CD8-positive, alpha-beta T cell (primary cell): ENCODE measurements at regions of chr17 and their contacts with region 1.

Region 1: DNA sequence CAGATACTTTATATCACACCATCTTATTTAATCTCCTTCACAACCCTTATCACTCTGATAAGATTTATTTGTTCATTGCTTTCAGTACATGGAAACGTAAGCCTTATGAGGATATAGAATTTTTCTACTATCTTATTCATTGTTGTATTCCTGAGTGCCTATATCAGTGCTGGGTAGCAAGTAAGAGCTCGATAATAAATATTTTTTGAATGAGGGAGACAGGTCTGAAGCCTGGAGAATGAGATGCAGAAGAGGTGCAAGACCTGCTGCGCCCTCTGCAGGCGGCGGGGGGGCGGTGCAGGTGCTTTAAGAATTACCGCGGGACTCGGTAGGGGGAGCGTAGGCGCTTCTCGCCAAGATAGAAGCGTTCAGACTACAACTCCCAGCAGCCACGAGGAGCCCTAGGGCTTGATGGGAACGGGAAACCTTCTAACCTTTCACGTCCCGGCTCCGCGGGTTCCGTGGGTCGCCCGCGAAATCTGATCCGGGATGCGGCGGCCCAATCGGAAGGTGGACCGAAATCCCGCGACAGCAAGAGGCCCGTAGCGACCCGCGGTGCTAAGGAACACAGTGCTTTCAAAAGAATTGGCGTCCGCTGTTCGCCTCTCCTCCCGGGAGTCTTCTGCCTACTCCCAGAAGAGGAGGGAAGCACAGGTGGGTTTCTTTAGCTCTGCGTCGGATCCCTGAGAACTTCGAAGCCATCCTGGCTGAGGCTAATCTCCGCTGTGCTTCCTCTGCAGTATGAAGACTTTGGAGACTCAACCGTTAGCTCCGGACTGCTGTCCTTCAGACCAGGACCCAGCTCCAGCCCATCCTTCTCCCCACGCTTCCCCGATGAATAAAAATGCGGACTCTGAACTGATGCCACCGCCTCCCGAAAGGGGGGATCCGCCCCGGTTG is at the start of gene WRAP53:
- DNase-seq: peak; percentile 93 to 97 (median 95)
- ATAC-seq: peak; percentile 77
- H3K4me3 ChIP-seq: peak within 1 kb of the TSS; percentile 81 to 92
- H3K4me3 Mint-ChIP-seq: peak within 1 kb of the TSS; percentile 97
- H3K27ac ChIP-seq: peak within 1 kb of the TSS; percentile 98 to 100
- H3K27ac Mint-ChIP-seq: peak within 1 kb of the TSS; percentile 100
- H3K4me1 ChIP-seq: peaks cover 32% of the 10 kb centered on the region
- H3K4me1 Mint-ChIP-seq: peaks cover 37% of the 10 kb centered on the region
- H3K27me3 ChIP-seq: no peaks in the 10 kb centered on the region
- H3K27me3 Mint-ChIP-seq: no peaks in the 10 kb centered on the region
- CTCF ChIP-seq: peak; percentile 98
- total RNA-seq, gene WRAP53: 5.2 to 6.6 TPM

Region 2: GRCh38 chr17:6651357-6651918 is 1036.7 kb before region 1 on chr17 and contains the starts of genes C17orf100 and MED31:
- CTCF ChIA-PET with region 1: no interaction called
- POLR2A ChIA-PET with region 1: no interaction called
- intact Hi-C with region 1: loop called in 1 of 2 experiments (anchors 10 kb)
- DNase-seq: peak; percentile 90 to 97 (median 94)
- ATAC-seq: peak; percentile 88
- H3K4me3 ChIP-seq: peak within 1 kb of the TSS; percentile 84 to 86
- H3K4me3 Mint-ChIP-seq: peak within 1 kb of the TSS; percentile 97
- H3K27ac ChIP-seq: peak within 1 kb of the TSS; percentile 99 to 100
- H3K27ac Mint-ChIP-seq: peak within 1 kb of the TSS; percentile 100
- H3K4me1 ChIP-seq: peaks cover 23% of the 10 kb centered on the region
- H3K4me1 Mint-ChIP-seq: peaks cover 69% of the 10 kb centered on the region
- H3K27me3 ChIP-seq: no peaks in the 10 kb centered on the region
- H3K27me3 Mint-ChIP-seq: no peaks in the 10 kb centered on the region
- CTCF ChIP-seq: no peak
- total RNA-seq, gene C17orf100: 0.39 to 0.73 TPM
- total RNA-seq, gene MED31: 21.4 to 25.6 TPM

Region 3: GRCh38 chr17:7252176-7253043 is 435.7 kb before region 1 on chr17 and contains the start of gene ELP5:
- CTCF ChIA-PET with region 1: no interaction called
- POLR2A ChIA-PET with region 1: interaction called, 3 read pairs
- intact Hi-C with region 1: loop called in 1 of 2 experiments (anchors 5 kb)
- DNase-seq: peak; percentile 73 to 99 (median 87)
- ATAC-seq: peak; percentile 48
- H3K4me3 ChIP-seq: peak within 1 kb of the TSS; percentile 81 to 92
- H3K4me3 Mint-ChIP-seq: peak within 1 kb of the TSS; percentile 97
- H3K27ac ChIP-seq: peak within 1 kb of the TSS; percentile 99
- H3K27ac Mint-ChIP-seq: peak within 1 kb of the TSS; percentile 100
- H3K4me1 ChIP-seq: peaks cover 31% of the 10 kb centered on the region
- H3K4me1 Mint-ChIP-seq: peaks cover 44% of the 10 kb centered on the region
- H3K27me3 ChIP-seq: no peaks in the 10 kb centered on the region
- H3K27me3 Mint-ChIP-seq: no peaks in the 10 kb centered on the region
- CTCF ChIP-seq: no peak
- total RNA-seq, gene ELP5: 38.9 to 39.0 TPM

Region 4: DNA sequence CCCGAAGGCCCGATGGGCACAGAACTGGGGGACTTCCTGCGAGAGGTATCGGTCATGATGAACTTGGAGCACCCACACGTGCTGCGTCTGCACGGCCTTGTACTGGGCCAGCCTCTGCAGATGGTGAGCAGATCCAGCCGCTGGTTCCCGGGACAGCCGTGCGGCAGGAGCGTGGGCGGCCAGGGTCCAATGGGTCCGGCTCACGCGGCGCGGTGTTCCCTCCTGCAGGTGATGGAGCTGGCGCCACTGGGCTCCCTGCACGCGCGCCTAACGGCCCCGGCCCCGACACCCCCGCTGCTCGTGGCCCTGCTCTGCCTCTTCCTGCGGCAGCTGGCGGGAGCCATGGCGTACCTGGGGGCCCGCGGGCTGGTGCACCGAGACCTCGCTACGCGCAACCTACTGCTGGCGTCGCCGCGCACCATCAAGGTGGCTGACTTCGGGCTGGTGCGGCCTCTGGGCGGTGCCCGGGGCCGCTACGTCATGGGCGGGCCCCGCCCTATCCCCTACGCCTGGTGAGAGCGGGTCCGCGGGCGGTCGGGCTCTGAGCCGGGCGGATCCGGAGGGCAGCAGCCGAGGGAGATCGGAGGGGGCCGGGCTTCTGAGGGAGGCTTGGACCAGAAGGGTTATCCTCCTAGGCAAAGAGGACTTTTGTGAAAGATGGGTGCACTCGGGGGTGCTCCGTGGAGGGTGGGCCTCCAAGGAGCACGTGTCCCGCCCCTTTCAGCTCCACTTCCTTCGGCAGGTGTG is 304.2 kb before region 1 on chr17:
- CTCF ChIA-PET with region 1: no interaction called
- POLR2A ChIA-PET with region 1: interaction called, 6 read pairs
- intact Hi-C with region 1: loop called in 1 of 2 experiments (anchors 1 kb)
- DNase-seq: peak; percentile 60 to 91 (median 80)
- ATAC-seq: peak; percentile 94
- H3K4me3 ChIP-seq: peak overlapping the region; percentile 66 to 75
- H3K4me3 Mint-ChIP-seq: peak overlapping the region; percentile 88
- H3K27ac ChIP-seq: peak overlapping the region; percentile 80 to 92
- H3K27ac Mint-ChIP-seq: peak overlapping the region; percentile 96
- H3K4me1 ChIP-seq: peaks cover 21% of the 10 kb centered on the region
- H3K4me1 Mint-ChIP-seq: peaks cover 8% of the 10 kb centered on the region
- H3K27me3 ChIP-seq: peaks cover 12 to 14% of the 10 kb centered on the region in 2 experiments
- H3K27me3 Mint-ChIP-seq: peaks cover 29% of the 10 kb centered on the region
- CTCF ChIP-seq: no peak

Region 5: GRCh38 chr17:7561028-7561575 is 127.1 kb before region 1 on chr17:
- CTCF ChIA-PET with region 1: interaction called, 17 read pairs
- POLR2A ChIA-PET with region 1: interaction called, 7 read pairs
- intact Hi-C with region 1: loop called in 1 of 2 experiments (anchors 1 kb)
- DNase-seq: peak; percentile 67 to 89 (median 81)
- ATAC-seq: peak; percentile 68
- H3K4me3 ChIP-seq: peak overlapping the region; percentile 50 to 95
- H3K4me3 Mint-ChIP-seq: peak overlapping the region; percentile 94
- H3K27ac ChIP-seq: peak overlapping the region; percentile 91 to 97
- H3K27ac Mint-ChIP-seq: peak overlapping the region; percentile 99
- H3K4me1 ChIP-seq: peaks cover 49% of the 10 kb centered on the region
- H3K4me1 Mint-ChIP-seq: peaks cover 50% of the 10 kb centered on the region
- H3K27me3 ChIP-seq: no peaks in the 10 kb centered on the region
- H3K27me3 Mint-ChIP-seq: no peaks in the 10 kb centered on the region
- CTCF ChIP-seq: peak; percentile 85

Region 6: DNA sequence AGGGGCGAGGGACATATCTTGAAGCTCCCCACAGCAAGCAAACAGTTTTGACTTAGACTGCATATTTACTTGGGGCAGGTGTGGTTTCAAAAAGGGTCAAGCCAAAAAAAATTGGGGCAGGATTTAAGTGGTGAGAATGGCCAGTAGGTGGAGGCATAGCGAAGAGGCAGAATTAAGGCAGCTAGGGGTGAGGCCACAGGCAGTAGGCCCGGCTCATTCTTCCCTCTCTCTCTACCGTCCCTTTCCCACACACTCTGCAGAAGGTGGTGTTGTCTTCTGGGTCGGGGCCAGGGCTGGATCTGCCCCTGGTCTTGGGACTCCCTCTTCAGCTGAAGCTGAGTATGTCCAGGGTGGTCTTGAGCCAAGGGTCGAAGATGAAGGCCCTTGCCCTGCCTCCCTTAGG is 55.7 kb before region 1 on chr17:
- CTCF ChIA-PET with region 1: interaction called, 32 read pairs
- POLR2A ChIA-PET with region 1: interaction called, 58 read pairs
- intact Hi-C with region 1: loop called (anchors 1 kb)
- DNase-seq: peak in 3 of 9 experiments; percentile 29 to 60 (median 51)
- ATAC-seq: no peak
- H3K4me3 ChIP-seq: no peak overlapping the region
- H3K4me3 Mint-ChIP-seq: no peak overlapping the region
- H3K27ac ChIP-seq: no peak overlapping the region
- H3K27ac Mint-ChIP-seq: no peak overlapping the region
- H3K4me1 ChIP-seq: no peaks in the 10 kb centered on the region
- H3K4me1 Mint-ChIP-seq: peaks cover 3% of the 10 kb centered on the region
- H3K27me3 ChIP-seq: no peaks in the 10 kb centered on the region
- H3K27me3 Mint-ChIP-seq: no peaks in the 10 kb centered on the region
- CTCF ChIP-seq: no peak

Region 7: GRCh38 chr17:7856883-7857723 is 168.9 kb after region 1 on chr17 and contains the start of gene NAA38:
- CTCF ChIA-PET with region 1: no interaction called
- POLR2A ChIA-PET with region 1: no interaction called
- intact Hi-C with region 1: loop called (anchors 2 kb)
- DNase-seq: peak; percentile 87 to 99 (median 95)
- ATAC-seq: peak; percentile 81
- H3K4me3 ChIP-seq: peak within 1 kb of the TSS; percentile 88 to 98
- H3K4me3 Mint-ChIP-seq: no peak within 1 kb of the TSS
- H3K27ac ChIP-seq: peak within 1 kb of the TSS; percentile 93 to 94
- H3K27ac Mint-ChIP-seq: no peak within 1 kb of the TSS
- H3K4me1 ChIP-seq: peaks cover 28% of the 10 kb centered on the region
- H3K4me1 Mint-ChIP-seq: peaks cover 5% of the 10 kb centered on the region
- H3K27me3 ChIP-seq: no peaks in the 10 kb centered on the region
- H3K27me3 Mint-ChIP-seq: no peaks in the 10 kb centered on the region
- CTCF ChIP-seq: no peak
- total RNA-seq, gene NAA38: 14.3 to 16.5 TPM

Region 8: GRCh38 chr17:7887482-7888183 is 199.5 kb after region 1 on chr17:
- CTCF ChIA-PET with region 1: no interaction called
- POLR2A ChIA-PET with region 1: no interaction called
- intact Hi-C with region 1: no loop called
- DNase-seq: peak; percentile 73 to 97 (median 87)
- ATAC-seq: peak; percentile 71
- H3K4me3 ChIP-seq: peak overlapping the region; percentile 86 to 89
- H3K4me3 Mint-ChIP-seq: no peak overlapping the region
- H3K27ac ChIP-seq: peak overlapping the region; percentile 61 to 80
- H3K27ac Mint-ChIP-seq: no peak overlapping the region
- H3K4me1 ChIP-seq: peaks cover 30% of the 10 kb centered on the region
- H3K4me1 Mint-ChIP-seq: peaks cover 13% of the 10 kb centered on the region
- H3K27me3 ChIP-seq: no peaks in the 10 kb centered on the region
- H3K27me3 Mint-ChIP-seq: no peaks in the 10 kb centered on the region
- CTCF ChIP-seq: no peak